ENCODE measurements at regions of chr16 and their contacts with region 1.

Region 1: GRCh38 chr16:81996664-81997622 is 14.3 kb downstream of the SDR42E1 start:
- DNase-seq: peak; percentile 49
- H3K4me3 Mint-ChIP-seq: peak overlapping the region; percentile 1
- H3K27ac Mint-ChIP-seq: peak overlapping the region; percentile 58
- H3K4me1 Mint-ChIP-seq: peaks cover 36% of the 10 kb centered on the region
- H3K27me3 Mint-ChIP-seq: no peaks in the 10 kb centered on the region
- CTCF ChIP-seq: peak; percentile 72

Region 2: GRCh38 chr16:81883235-81883634 is 113.7 kb before region 1 on chr16:
- CTCF ChIA-PET with region 1: no interaction called
- intact Hi-C with region 1: no loop called
- DNase-seq: no peak
- H3K4me3 Mint-ChIP-seq: no peak overlapping the region
- H3K27ac Mint-ChIP-seq: no peak overlapping the region
- H3K4me1 Mint-ChIP-seq: no peaks in the 10 kb centered on the region
- H3K27me3 Mint-ChIP-seq: peaks cover 79% of the 10 kb centered on the region
- CTCF ChIP-seq: no peak

Region 3: GRCh38 chr16:81940781-81941560 is 56.0 kb before region 1 on chr16:
- CTCF ChIA-PET with region 1: interaction called, 18 read pairs
- intact Hi-C with region 1: loop called (anchors 2 kb)
- DNase-seq: peak; percentile 58
- H3K4me3 Mint-ChIP-seq: no peak overlapping the region
- H3K27ac Mint-ChIP-seq: no peak overlapping the region
- H3K4me1 Mint-ChIP-seq: peaks cover 11% of the 10 kb centered on the region
- H3K27me3 Mint-ChIP-seq: peaks cover 31% of the 10 kb centered on the region
- CTCF ChIP-seq: peak; percentile 47

Region 4: GRCh38 chr16:82031116-82032084 is 34.5 kb after region 1 on chr16:
- CTCF ChIA-PET with region 1: interaction called, 5 read pairs
- intact Hi-C with region 1: loop called (anchors 5 kb)
- DNase-seq: peak; percentile 41
- H3K4me3 Mint-ChIP-seq: no peak overlapping the region
- H3K27ac Mint-ChIP-seq: no peak overlapping the region
- H3K4me1 Mint-ChIP-seq: peaks cover 39% of the 10 kb centered on the region
- H3K27me3 Mint-ChIP-seq: no peaks in the 10 kb centered on the region
- CTCF ChIP-seq: no peak

Region 5: DNA sequence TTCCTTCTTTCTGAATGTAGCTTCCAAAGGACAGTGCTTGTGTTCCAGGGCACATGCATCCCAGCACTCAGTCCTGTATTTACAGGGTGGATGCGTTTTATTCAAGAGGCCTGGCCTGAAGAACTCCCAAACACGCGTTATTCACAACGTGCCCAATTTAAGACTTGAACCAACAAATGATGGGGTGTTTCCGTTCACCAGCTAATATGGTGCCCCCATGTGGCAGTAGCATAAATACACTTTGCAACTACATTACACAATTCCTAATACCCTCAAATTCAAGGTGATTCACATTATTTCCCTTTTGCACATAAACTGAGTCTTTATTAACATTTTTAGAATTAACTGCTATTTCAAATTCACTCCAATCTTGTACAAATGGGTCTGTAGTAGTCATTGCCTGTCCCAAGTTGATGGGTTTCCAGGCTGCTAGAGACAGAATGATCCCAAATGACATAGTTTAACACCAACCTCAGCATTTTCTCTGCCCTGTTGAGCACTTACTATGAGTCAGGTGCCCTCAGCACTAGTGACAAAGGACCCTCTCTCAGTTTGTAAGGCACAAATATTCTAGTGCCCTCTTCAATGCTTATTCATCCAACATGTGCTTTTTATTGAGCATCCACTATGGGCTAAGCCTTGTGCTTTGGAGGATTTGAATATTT is 65.0 kb after region 1 on chr16:
- CTCF ChIA-PET with region 1: interaction called, 12 read pairs
- intact Hi-C with region 1: no loop called
- DNase-seq: peak; percentile 59
- H3K4me3 Mint-ChIP-seq: no peak overlapping the region
- H3K27ac Mint-ChIP-seq: peak overlapping the region; percentile 15
- H3K4me1 Mint-ChIP-seq: peaks cover 29% of the 10 kb centered on the region
- H3K27me3 Mint-ChIP-seq: no peaks in the 10 kb centered on the region
- CTCF ChIP-seq: peak; percentile 68

Region 6: GRCh38 chr16:82091241-82091640 is 94.3 kb after region 1 on chr16:
- CTCF ChIA-PET with region 1: no interaction called
- intact Hi-C with region 1: no loop called
- DNase-seq: no peak
- H3K4me3 Mint-ChIP-seq: no peak overlapping the region
- H3K27ac Mint-ChIP-seq: no peak overlapping the region
- H3K4me1 Mint-ChIP-seq: peaks cover 38% of the 10 kb centered on the region
- H3K27me3 Mint-ChIP-seq: no peaks in the 10 kb centered on the region
- CTCF ChIP-seq: no peak

Region 7: DNA sequence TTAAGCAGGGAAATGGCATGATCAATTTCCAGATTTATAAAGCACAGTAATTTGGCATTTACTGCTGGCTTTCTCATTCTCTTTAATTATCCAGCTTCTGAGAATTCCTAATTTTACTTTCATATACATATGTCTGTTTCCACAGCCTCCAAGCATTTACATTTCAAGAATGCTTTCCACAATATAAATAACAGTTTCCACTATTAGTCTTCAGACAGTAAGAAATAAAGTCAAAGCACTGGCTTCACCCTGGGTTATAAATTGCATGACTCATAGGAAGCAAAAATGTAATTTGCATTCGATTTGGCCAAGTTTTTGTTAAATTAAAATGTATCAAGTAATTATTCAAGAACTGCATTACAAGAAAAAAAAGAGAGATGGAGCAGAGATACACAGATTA is 119.6 kb after region 1 on chr16:
- CTCF ChIA-PET with region 1: no interaction called
- intact Hi-C with region 1: no loop called
- DNase-seq: no peak
- H3K4me3 Mint-ChIP-seq: no peak overlapping the region
- H3K27ac Mint-ChIP-seq: no peak overlapping the region
- H3K4me1 Mint-ChIP-seq: peaks cover 9% of the 10 kb centered on the region
- H3K27me3 Mint-ChIP-seq: no peaks in the 10 kb centered on the region
- CTCF ChIP-seq: no peak